H1 (cell line): ENCODE measurements at regions of chr10 and their contacts with region 1.

Region 1: DNA sequence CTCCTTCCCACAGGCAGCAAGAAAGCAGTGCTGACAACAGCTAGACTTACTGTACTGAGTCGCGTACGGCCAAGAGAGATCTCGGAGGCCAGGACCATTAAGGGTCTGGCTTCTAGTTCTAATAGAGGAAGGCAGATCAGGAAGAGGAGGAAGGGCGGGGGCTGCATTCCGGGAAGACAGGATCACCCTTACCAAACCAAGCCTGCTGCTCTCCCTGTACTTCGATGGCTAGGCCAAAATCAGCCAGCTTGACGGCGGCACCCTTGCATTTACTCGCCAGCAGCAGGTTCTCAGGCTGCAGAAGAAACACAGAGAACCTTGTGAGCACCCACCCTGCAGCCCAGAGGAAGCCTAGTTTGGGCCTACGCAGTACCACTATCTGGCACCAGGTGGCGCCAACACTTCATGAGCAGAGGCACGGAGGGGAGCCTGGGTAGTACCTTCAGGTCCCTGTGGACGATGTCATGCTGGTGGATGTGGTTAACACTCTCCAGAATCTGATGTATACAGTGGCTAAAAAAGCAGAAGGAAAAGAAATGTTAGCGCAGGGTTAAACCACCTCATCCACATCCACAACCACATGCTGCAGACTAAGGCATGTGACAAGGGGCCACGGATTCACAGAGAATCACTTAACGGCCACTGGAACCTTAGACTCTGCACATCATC is 25.4 kb downstream of the CAMK2G start:
- DNase-seq: peak; percentile 60 to 99
- H3K4me3 ChIP-seq: no peak overlapping the region
- H3K27ac ChIP-seq: no peak overlapping the region
- H3K4me1 ChIP-seq: peaks cover 0 to 7% (median 3%) of the 10 kb centered on the region in 4 experiments; a peak in 3 of 7 replicates
- H3K27me3 ChIP-seq: no peaks in the 10 kb centered on the region
- CTCF ChIP-seq: peak; percentile 94 to 100 (median 99)
- EP300 ChIP-seq: no peak
- POLR2A ChIP-seq: no peak
- RAD21 ChIP-seq: peak; percentile 95 to 98

Region 2: DNA sequence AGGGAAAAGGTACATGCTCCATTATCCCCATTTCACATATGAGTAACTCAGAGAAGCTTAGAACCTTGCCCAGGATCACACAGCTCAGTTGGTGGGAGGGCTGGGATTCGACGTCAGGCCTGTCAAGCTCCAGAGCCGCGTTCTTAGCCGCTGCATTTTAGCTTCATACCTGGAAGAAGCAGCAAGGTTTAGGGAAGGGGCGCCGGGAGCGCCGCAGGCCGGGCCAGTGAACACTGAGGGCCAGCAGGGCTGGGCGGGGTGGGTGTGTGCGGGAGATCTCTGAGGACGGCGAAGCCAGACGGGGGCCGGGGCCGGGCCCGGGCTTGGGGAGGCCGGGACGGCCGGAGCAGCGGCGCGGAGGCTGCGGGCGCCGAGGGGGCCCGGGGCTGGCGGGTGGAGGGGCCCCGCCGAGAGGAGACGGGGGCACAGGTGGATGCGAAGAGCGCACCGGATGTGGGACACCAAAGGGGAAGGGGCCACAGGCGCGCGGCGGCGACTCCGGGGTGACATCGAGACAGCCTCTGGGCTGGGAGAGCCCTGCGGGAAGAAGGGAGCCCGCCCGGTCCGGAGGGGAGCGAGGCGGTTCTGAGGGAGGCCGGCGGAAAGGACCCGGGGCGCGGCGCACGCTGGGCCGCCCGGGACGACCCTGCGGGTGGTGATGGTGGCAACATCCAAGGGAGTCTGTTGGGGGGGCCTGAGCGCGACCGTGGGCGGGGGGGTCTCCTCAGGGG is 38.1 kb before region 1 on chr10:
- CTCF ChIA-PET with region 1: interaction called, 209 read pairs
- POLR2A ChIA-PET with region 1: interaction called, 3 read pairs
- DNase-seq: peak in 1 of 2 experiments; percentile 75
- H3K4me3 ChIP-seq: peak overlapping the region; percentile 69 to 91 (median 78)
- H3K27ac ChIP-seq: no peak overlapping the region
- H3K4me1 ChIP-seq: peaks cover 0 to 4% (median 2%) of the 10 kb centered on the region in 4 experiments; a peak in 4 of 7 replicates
- H3K27me3 ChIP-seq: no peaks in the 10 kb centered on the region
- CTCF ChIP-seq: no peak
- EP300 ChIP-seq: no peak
- POLR2A ChIP-seq: no peak
- RAD21 ChIP-seq: no peak

Region 3: DNA sequence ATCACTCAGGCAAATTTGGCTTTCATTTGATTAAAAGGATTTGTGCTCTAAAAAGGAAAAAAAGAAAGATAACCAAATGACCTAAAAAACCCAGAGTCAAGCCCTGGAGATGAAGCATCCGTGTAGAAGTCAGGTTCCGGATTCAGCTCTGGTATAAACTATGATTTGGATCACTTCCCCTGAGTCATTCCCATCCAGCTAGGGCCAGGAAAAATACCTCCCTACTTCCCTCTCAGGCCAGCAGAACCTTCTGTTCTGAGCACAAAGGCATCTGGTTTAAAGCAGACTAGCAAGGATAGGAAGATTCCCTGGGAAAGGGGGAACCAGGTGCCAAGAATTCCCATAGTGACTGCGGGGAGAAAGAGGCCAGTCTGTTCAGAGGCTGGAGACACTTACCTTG is 11.9 kb before region 1 on chr10:
- CTCF ChIA-PET with region 1: interaction called, 142 read pairs
- POLR2A ChIA-PET with region 1: interaction called, 3 read pairs
- DNase-seq: no peak
- H3K4me3 ChIP-seq: no peak overlapping the region
- H3K27ac ChIP-seq: no peak overlapping the region
- H3K4me1 ChIP-seq: no peaks in the 10 kb centered on the region
- H3K27me3 ChIP-seq: no peaks in the 10 kb centered on the region
- CTCF ChIP-seq: no peak
- EP300 ChIP-seq: no peak
- POLR2A ChIP-seq: no peak
- RAD21 ChIP-seq: no peak

Region 4: DNA sequence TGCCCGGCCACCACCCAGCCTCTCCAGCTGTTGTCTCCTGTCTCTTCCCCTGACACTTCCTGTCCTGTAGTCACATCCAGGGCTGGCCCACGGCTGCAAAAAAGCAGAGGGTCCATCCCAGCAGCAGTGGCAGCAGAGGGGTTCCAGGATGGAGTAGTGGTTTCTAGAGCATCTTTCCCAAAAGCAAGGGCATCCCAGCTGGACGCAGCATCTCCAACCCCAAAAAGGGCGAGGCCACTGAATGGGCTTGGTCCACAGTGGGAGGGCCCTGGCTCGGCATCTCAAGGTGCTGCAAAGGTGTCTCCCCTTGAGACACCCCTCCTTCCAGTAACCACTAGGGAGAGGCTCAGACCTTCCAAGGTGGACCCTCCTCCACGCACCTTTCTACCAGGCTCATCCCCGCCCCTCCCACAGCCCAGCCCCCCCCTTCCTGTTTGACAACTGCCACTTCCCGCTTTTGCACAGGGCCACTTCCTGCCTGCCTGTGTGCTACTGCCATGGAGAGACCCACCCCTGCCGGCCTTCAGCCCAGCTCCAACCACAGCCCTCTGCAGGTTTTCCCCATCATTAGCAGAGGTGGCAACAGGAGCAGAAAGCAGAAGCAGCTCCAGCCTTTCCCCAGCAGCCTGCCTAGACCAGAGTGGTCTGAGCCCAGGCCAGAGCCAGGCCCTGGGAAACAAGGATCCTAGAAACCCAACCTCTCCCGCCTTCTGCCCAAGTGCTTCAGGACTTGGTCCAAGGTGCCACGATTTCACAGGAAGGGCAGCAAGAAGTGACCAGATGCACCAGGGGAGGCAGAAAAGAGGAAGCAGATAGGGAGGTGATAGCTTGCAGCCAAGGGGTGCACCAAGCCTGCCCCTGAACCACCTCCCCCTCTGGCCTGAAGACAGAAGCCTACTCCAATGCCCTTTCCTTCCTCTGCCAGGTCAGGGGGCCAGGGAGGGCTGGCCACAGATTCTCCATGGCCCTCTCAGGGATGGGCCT is 16.8 kb after region 1 on chr10:
- CTCF ChIA-PET with region 1: interaction called, 181 read pairs
- POLR2A ChIA-PET with region 1: interaction called, 17 read pairs
- DNase-seq: no peak
- H3K4me3 ChIP-seq: no peak overlapping the region
- H3K27ac ChIP-seq: no peak overlapping the region; the same call in 1 of the 2 replicates
- H3K4me1 ChIP-seq: peaks cover 0 to 9% (median 4%) of the 10 kb centered on the region in 4 experiments; a peak in 6 of 7 replicates
- H3K27me3 ChIP-seq: no peaks in the 10 kb centered on the region
- CTCF ChIP-seq: no peak
- EP300 ChIP-seq: no peak
- POLR2A ChIP-seq: no peak
- RAD21 ChIP-seq: no peak

Region 5: GRCh38 chr10:73871915-73872710 is 23.2 kb after region 1 on chr10:
- CTCF ChIA-PET with region 1: interaction called, 279 read pairs
- POLR2A ChIA-PET with region 1: interaction called, 9 read pairs
- DNase-seq: no peak
- H3K4me3 ChIP-seq: no peak overlapping the region
- H3K27ac ChIP-seq: no peak overlapping the region
- H3K4me1 ChIP-seq: peaks cover 0 to 18% (median 13%) of the 10 kb centered on the region in 4 experiments; a peak in 6 of 7 replicates
- H3K27me3 ChIP-seq: peaks cover 0 to 3% (median 0%) of the 10 kb centered on the region in 4 experiments; a peak in 1 of 7 replicates
- CTCF ChIP-seq: peak in 2 of 3 experiments; percentile 18 to 24; a peak in 2 of 4 replicates
- EP300 ChIP-seq: no peak
- POLR2A ChIP-seq: no peak
- RAD21 ChIP-seq: peak in 1 of 2 experiments; percentile 19; a peak in 1 of 4 replicates